ENCODE measurements at regions of chr3 and their contacts with region 1.

Region 1: GRCh38 chr3:4633078-4634004 is 140.2 kb downstream of the ITPR1 start:
- DNase-seq: no peak
- H3K4me3 ChIP-seq: no peak overlapping the region
- H3K27ac ChIP-seq: peak overlapping the region in 1 of 2 donors; percentile 40
- H3K4me1 ChIP-seq: no peaks in the 10 kb centered on the region
- H3K27me3 ChIP-seq: no peaks in the 10 kb centered on the region
- CTCF ChIP-seq: peak; percentile 73 to 81 (median 78)

Region 2: GRCh38 chr3:4466741-4467521 is 166.4 kb before region 1 on chr3 and contains the start of gene SUMF1:
- intact Hi-C with region 1: loop called (anchors 5 kb)
- DNase-seq: peak; percentile 46 to 90
- H3K4me3 ChIP-seq: peak within 1 kb of the TSS; percentile 70
- H3K27ac ChIP-seq: peak within 1 kb of the TSS; percentile 48 to 75
- H3K4me1 ChIP-seq: peaks cover 4 to 11% of the 10 kb centered on the region in 2 donors
- H3K27me3 ChIP-seq: no peaks in the 10 kb centered on the region
- CTCF ChIP-seq: no peak
- total RNA-seq, gene SUMF1: 98.4 TPM

Region 3: DNA sequence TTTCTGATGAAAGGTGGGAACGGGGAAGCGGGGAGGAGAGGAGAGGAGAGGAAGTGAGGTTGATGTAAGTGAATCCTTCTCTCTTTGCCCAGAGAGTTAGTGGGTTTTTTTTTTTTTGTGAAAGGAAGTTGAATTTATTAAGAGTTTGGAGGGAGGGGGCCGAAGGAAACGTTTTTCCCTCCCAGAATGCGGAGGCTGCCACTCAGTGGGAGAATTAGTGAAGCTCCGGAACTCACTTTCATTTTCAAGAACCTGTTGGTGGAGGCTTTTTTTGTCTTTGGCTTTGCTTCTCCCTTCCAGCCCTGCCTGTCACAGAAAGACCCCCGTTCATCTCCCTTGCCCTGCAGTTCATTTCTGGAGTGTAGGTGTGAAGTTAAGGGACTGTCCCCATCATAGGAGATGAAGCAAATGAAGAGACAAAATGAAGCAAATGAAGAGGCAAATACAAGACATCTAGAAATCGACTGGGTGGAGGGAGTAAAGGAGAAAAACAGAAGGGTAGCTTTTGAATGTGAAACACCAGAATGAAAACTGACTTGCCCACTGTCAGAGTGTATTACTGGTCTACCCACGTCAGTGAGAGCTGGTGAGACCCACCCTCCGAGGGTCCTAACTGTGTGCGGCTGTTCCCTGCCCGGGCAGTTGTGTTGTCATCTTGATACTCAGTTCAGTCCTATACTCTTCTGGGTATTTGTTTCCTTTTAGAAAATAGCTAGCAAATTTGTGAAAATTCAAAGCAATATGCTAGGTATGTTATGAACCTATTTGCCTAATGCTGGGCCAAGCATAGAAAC is 48.7 kb before region 1 on chr3:
- intact Hi-C with region 1: loop called (anchors 5 kb)
- DNase-seq: no peak
- H3K4me3 ChIP-seq: peak overlapping the region; percentile 43 to 57
- H3K27ac ChIP-seq: peak overlapping the region; percentile 84 to 86
- H3K4me1 ChIP-seq: peaks cover 0 to 41% of the 10 kb centered on the region in 2 donors
- H3K27me3 ChIP-seq: no peaks in the 10 kb centered on the region
- CTCF ChIP-seq: peak in 2 of 3 experiments; percentile 39 to 55

Region 4: GRCh38 chr3:4670352-4670751 is 37.0 kb after region 1 on chr3:
- intact Hi-C with region 1: no loop called
- DNase-seq: no peak
- H3K4me3 ChIP-seq: no peak overlapping the region
- H3K27ac ChIP-seq: no peak overlapping the region
- H3K4me1 ChIP-seq: no peaks in the 10 kb centered on the region
- H3K27me3 ChIP-seq: no peaks in the 10 kb centered on the region
- CTCF ChIP-seq: no peak

Region 5: GRCh38 chr3:4751502-4752101 is 118.3 kb after region 1 on chr3:
- intact Hi-C with region 1: no loop called
- DNase-seq: peak in 1 of 2 donors; percentile 61
- H3K4me3 ChIP-seq: no peak overlapping the region
- H3K27ac ChIP-seq: peak overlapping the region; percentile 46 to 49
- H3K4me1 ChIP-seq: peaks cover 7 to 22% of the 10 kb centered on the region in 2 donors
- H3K27me3 ChIP-seq: no peaks in the 10 kb centered on the region
- CTCF ChIP-seq: no peak